Sigmoid colon (tissue), 7 donors: ENCODE measurements at regions of chr2 and their contacts with region 1.

Region 1: DNA sequence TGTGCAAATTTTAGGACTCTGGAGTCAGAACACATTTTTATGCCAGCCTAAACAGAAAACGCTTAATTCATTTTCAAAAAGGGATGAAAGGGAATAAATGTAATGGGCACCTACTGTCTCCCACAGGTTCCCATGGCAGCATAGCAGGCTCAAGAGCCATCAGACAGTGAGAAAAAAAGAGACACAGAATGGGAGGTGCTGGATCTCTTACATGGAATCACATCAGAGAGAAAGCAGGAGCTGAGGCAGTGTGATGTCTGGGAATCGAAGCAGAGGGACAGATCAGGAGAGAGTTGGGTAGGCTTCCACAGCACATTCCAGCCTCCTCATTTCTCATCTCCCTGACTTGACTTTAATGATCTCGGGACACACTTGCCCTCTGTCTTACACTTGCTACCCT is 684.3 kb downstream of the KCNJ3 start:
- DNase-seq: no peak
- H3K4me3 ChIP-seq: no peak overlapping the region
- H3K27ac ChIP-seq: no peak overlapping the region
- H3K4me1 ChIP-seq: no peaks in the 10 kb centered on the region
- H3K27me3 ChIP-seq: no peaks in the 10 kb centered on the region
- CTCF ChIP-seq: no peak
- EP300 ChIP-seq: no peak
- POLR2A ChIP-seq: no peak

Region 2: GRCh38 chr2:157194097-157194688 is 1811.4 kb after region 1 on chr2:
- intact Hi-C with region 1: loop called (anchors 5 kb)
- DNase-seq: no peak
- H3K4me3 ChIP-seq: no peak overlapping the region
- H3K27ac ChIP-seq: no peak overlapping the region
- H3K4me1 ChIP-seq: no peaks in the 10 kb centered on the region
- H3K27me3 ChIP-seq: no peaks in the 10 kb centered on the region
- CTCF ChIP-seq: peak in 3 of 4 experiments; percentile 35 to 61 (median 46)
- EP300 ChIP-seq: no peak
- POLR2A ChIP-seq: no peak